Activated CD8-positive, alpha-beta T cell treated with anti-CD3 and anti-CD28 coated beads, Interleukin-2, amount 10 ng/mL, durations not matched to agents 7 days and 5 days (primary cell): ENCODE measurements at regions of chr5 and their contacts with region 1.

Region 1: DNA sequence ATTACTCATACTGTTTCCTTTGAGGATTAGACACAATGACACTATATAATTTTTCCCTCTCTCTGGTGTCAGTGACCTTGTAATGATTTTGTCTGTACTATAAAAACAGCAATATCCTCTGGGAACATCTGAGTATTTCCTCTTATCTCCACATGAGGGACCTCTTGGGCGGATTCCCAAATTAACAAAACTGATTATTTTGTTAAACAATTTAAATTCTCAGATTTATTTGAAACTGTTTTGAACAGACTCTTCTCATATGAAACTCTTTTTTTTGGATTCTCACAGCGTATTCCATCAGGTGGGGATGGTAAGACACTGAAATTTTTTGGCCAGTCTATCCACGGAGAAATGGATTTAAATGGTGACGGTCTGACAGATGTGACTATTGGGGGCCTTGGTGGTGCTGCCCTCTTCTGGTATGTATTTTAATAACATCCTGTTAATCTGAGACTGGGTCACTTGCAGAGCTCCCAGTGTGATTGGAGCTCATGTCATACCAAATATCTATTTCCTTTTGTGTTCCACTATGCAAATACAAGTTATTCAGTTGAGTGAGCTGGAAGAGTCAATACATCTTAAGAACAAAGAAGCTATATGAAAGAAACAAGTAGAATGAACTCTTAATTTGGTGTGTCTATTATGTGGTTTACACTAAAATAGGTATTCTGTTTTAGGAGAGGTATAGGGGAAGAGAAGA is 73.8 kb upstream of the ITGA2 start:
- DNase-seq: peak; percentile 74
- ATAC-seq: peak; percentile 93
- H3K4me3 Mint-ChIP-seq: peak overlapping the region; percentile 50
- H3K27ac Mint-ChIP-seq: no peak overlapping the region
- H3K4me1 Mint-ChIP-seq: peaks cover 10% of the 10 kb centered on the region
- H3K27me3 Mint-ChIP-seq: no peaks in the 10 kb centered on the region

Region 2: GRCh38 chr5:52657247-52657645 is 258.1 kb before region 1 on chr5:
- CTCF ChIA-PET with region 1: interaction called, 16 read pairs
- POLR2A ChIA-PET with region 1: no interaction called
- DNase-seq: no peak
- ATAC-seq: no peak
- H3K4me3 Mint-ChIP-seq: no peak overlapping the region
- H3K27ac Mint-ChIP-seq: no peak overlapping the region
- H3K4me1 Mint-ChIP-seq: no peaks in the 10 kb centered on the region
- H3K27me3 Mint-ChIP-seq: peaks cover 11% of the 10 kb centered on the region

Region 3: DNA sequence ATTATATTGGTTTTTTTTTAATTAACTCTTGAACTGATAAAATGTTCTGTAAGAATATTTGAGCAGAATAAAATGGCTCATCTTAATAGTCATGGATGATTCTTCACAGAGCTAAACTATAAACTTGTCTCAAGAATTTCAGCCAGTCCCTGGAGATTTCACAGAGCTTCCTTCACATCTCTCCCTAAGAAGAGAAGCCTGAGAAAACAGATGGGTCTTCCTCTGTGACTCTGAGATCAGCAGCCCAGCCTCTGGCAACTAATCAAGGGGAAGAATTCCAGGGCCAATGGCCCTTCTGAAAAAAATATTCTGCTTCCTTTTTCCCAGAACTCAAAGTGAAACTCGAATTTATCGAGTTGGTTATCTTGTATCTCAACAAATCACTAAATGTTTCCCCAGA is 249.8 kb before region 1 on chr5:
- CTCF ChIA-PET with region 1: interaction called, 10 read pairs
- POLR2A ChIA-PET with region 1: no interaction called
- DNase-seq: no peak
- ATAC-seq: no peak
- H3K4me3 Mint-ChIP-seq: no peak overlapping the region
- H3K27ac Mint-ChIP-seq: no peak overlapping the region
- H3K4me1 Mint-ChIP-seq: peaks cover 8% of the 10 kb centered on the region
- H3K27me3 Mint-ChIP-seq: peaks cover 14% of the 10 kb centered on the region

Region 4: GRCh38 chr5:52693280-52693679 is 222.0 kb before region 1 on chr5:
- CTCF ChIA-PET with region 1: interaction called, 23 read pairs
- POLR2A ChIA-PET with region 1: no interaction called
- DNase-seq: peak; percentile 54
- ATAC-seq: peak; percentile 55
- H3K4me3 Mint-ChIP-seq: no peak overlapping the region
- H3K27ac Mint-ChIP-seq: no peak overlapping the region
- H3K4me1 Mint-ChIP-seq: peaks cover 20% of the 10 kb centered on the region
- H3K27me3 Mint-ChIP-seq: peaks cover 4% of the 10 kb centered on the region

Region 5: GRCh38 chr5:52895572-52896413 is 19.5 kb before region 1 on chr5:
- CTCF ChIA-PET with region 1: no interaction called
- POLR2A ChIA-PET with region 1: no interaction called
- DNase-seq: no peak
- ATAC-seq: no peak
- H3K4me3 Mint-ChIP-seq: no peak overlapping the region
- H3K27ac Mint-ChIP-seq: no peak overlapping the region
- H3K4me1 Mint-ChIP-seq: peaks cover 3% of the 10 kb centered on the region
- H3K27me3 Mint-ChIP-seq: no peaks in the 10 kb centered on the region

Region 6: DNA sequence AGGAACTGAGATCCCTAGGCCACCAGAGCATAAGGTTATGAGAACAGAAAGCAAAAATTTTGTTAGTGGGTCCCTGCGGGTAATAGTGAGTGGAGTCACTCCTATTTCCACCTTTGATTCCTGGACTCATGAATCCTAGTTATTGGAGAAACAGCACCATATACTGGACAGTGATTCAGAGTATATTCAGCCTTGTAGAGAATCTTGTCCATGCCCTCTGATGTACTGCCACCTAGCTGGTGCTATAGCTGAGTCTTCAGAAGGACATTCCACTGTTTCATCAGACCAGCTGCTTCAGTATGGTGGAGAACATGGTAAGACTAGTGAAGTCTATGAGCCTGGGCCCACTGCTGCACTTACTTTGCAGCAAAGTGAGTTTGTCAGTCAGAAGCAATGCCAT is 48.8 kb after region 1 on chr5:
- CTCF ChIA-PET with region 1: no interaction called
- POLR2A ChIA-PET with region 1: no interaction called
- DNase-seq: no peak
- ATAC-seq: no peak
- H3K4me3 Mint-ChIP-seq: no peak overlapping the region
- H3K27ac Mint-ChIP-seq: no peak overlapping the region
- H3K4me1 Mint-ChIP-seq: no peaks in the 10 kb centered on the region
- H3K27me3 Mint-ChIP-seq: peaks cover 33% of the 10 kb centered on the region